Activated naive CD4-positive, alpha-beta T cell treated with anti-CD3 and anti-CD28 coated beads for 36 hours (primary cell): ENCODE measurements at regions of chr4 and their contacts with region 1.

Region 1: DNA sequence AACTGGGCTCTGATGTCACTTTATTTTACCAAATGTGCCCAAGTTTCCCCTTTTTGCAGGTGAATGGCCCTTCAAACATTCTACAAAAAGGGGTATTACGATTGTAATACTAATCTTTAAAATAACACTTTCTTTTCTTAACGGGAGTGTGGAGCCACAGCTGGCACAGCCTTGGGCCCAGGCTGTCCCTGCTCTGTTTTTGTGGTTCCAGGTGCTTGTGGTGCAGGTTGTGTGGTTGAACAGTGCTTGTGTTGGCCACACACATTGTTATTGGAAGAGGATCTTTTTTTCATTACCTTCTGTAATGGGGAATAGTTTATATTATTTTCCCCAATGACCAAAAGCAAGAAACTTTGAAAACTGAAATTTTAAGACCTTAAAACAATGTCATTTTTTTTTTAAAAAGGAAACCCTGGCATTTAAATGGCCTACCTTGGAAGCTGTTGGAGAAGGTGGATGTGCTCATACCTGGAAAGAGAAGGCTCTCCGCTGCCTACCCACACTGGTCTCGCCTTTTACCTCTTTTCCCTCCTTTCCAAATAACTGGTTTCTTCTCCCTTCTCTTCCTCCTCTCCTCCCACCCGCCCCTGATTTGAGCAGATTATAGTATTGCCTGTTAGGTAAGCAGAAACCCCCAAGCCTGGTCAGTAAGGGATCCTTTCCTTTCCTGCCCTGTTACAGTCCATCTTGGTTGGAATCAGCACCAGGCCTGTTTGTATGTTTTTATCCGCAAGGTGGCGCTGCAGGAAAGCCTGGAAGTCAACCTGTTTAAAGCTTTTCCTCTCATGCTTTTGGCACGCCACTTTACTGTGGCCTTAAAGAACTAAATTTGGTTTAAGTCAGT is 28.6 kb downstream of the HADH start:
- DNase-seq: peak; percentile 95
- H3K4me3 Mint-ChIP-seq: no peak overlapping the region
- H3K27ac Mint-ChIP-seq: no peak overlapping the region
- H3K4me1 Mint-ChIP-seq: peaks cover 13% of the 10 kb centered on the region
- H3K27me3 Mint-ChIP-seq: no peaks in the 10 kb centered on the region

Region 2: DNA sequence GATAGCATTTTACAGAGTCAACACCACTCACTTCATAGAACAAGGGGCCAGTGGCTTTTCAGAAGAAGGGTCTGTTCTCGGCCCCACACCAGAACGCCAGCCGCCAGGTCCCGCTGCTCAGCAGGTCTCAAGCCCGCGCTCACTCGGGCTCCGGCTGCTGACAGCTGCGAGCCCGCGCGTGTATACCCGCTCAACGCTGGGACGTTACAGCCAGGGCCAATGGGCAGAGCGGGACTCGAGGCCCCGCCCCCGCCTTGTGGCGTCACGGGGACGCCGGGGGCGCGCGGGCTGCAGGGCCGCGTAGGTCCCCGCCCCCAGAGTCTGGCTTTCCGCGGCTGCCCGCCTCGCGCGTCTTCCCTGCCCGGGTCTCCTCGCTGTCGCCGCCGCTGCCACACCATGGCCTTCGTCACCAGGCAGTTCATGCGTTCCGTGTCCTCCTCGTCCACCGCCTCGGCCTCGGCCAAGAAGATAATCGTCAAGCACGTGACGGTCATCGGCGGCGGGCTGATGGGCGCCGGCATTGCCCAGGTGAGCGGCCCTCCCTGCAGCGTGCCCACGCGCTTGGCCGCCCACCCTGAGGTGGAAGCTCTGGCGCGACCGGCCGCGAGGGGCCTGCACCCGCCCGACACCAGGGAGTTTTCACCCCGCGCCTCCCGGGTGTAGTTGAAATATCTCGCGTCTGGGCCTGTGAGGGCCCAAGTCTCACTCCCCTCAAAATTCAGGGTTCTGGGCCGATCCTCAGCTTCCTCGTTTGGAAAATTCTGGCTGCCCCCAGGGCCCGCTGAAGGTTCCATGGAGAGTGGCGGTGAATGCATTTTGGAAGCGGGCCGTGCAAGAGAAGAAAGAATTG is 28.5 kb before region 1 on chr4 and contains the start of gene HADH:
- CTCF ChIA-PET with region 1: interaction called, 17 read pairs
- intact Hi-C with region 1: no loop called
- DNase-seq: peak; percentile 94
- H3K4me3 Mint-ChIP-seq: peak within 1 kb of the TSS; percentile 98
- H3K27ac Mint-ChIP-seq: peak within 1 kb of the TSS; percentile 90
- H3K4me1 Mint-ChIP-seq: peaks cover 57% of the 10 kb centered on the region
- H3K27me3 Mint-ChIP-seq: no peaks in the 10 kb centered on the region
- total RNA-seq, gene HADH: 56.1 to 57.6 TPM

Region 3: DNA sequence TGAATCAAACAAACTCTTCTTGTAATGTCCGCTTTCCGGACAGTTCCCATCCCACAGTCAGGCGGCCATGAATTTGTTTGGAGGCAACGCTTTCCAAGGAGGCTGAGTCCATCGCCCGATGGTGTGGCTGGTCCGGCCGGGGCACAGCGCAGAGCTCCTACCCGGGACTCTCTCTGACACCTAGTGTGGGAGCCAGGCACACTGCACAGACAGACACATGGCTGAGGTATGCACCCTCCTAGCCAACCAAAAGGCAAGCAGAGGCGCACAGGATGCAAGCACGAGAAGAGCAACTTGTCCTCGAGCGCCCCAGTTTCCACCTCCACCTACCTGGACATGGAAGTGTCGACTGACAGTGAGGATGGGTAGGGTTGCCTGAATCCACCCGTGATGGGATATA is 63.0 kb after region 1 on chr4:
- CTCF ChIA-PET with region 1: no interaction called
- intact Hi-C with region 1: no loop called
- DNase-seq: peak; percentile 67
- H3K4me3 Mint-ChIP-seq: peak overlapping the region; percentile 74
- H3K27ac Mint-ChIP-seq: peak overlapping the region; percentile 93
- H3K4me1 Mint-ChIP-seq: peaks cover 81% of the 10 kb centered on the region
- H3K27me3 Mint-ChIP-seq: no peaks in the 10 kb centered on the region

Region 4: DNA sequence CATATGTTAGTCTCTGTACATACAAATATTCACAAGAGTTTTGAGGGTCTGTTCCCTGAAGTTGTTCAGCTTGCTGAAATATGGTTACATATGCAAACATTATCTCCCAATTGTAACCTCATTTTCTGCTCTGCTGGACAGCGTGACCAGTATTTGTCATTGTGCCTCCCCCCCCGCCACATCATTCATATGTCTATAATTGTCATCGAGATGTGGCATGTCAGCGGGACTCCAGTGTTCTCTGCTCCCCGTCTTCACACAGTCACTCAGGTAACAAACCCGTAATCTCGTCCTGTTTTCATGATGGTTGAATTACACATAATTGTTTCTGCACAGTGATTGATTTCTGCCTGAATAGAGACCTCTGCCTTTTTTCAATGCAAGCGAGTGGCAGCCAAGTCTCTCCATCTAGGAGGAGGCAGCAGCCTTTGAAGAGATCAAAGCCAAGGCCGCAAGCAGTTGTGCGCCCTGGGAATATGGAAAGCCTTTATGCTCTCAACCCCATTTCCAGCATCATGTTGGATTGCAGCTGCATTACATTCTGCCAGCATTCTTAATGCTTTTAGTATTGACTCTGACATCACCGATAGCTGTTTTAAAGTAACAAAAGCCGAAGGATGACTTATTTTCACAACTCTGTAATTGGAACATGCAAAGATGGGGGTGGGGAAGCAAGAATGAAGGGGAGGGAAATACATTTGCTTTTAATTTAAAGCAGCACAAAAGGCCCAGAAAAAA is 123.1 kb after region 1 on chr4:
- CTCF ChIA-PET with region 1: interaction called, 10 read pairs
- intact Hi-C with region 1: no loop called
- DNase-seq: peak; percentile 72
- H3K4me3 Mint-ChIP-seq: peak overlapping the region; percentile 77
- H3K27ac Mint-ChIP-seq: peak overlapping the region; percentile 99
- H3K4me1 Mint-ChIP-seq: peaks cover 89% of the 10 kb centered on the region
- H3K27me3 Mint-ChIP-seq: no peaks in the 10 kb centered on the region

Region 5: DNA sequence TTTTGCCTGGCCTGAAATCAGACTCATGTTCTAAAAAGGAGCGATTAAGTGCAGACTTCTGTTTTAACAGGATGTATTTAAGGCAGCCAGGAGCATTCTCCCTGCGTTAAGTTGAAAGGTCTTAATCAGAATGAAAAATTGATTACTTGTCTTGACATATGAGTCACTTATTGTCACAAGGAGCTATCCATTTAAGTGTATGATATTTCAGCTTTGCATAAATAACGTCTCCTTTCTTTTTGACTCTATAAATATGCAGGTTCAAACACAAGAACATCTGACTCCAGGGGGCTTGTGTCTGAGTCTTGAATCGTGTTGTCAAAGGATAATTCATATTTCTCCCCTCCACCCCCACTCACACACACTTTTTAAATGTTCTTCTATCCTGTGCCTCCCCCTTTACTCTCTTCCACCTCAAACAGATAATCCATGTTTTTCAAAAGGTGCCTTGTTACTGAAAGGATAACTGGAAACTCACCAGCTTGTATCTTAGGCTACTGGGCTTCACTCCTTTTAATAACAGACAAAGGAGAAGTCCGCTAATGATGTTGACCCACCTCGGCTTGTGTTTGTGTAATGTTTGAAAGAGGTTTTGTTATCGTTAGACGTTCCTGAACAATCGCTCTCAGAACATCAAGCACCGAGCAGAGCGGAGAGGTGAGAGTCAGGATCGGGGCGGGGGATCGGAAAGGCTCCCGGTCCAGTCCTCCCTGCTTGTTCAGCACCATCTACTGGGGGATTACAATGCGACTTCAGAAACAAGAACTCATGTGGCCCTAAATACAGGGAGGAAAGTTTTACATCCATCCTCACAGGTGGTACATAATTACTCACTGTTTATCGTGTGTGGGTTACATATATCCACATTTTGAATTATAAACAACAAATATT is 494.6 kb after region 1 on chr4:
- CTCF ChIA-PET with region 1: interaction called, 7 read pairs
- intact Hi-C with region 1: loop called (anchors 1 kb)
- DNase-seq: peak; percentile 72
- H3K4me3 Mint-ChIP-seq: peak overlapping the region; percentile 75
- H3K27ac Mint-ChIP-seq: peak overlapping the region; percentile 72
- H3K4me1 Mint-ChIP-seq: peaks cover 17% of the 10 kb centered on the region
- H3K27me3 Mint-ChIP-seq: no peaks in the 10 kb centered on the region

Region 6: DNA sequence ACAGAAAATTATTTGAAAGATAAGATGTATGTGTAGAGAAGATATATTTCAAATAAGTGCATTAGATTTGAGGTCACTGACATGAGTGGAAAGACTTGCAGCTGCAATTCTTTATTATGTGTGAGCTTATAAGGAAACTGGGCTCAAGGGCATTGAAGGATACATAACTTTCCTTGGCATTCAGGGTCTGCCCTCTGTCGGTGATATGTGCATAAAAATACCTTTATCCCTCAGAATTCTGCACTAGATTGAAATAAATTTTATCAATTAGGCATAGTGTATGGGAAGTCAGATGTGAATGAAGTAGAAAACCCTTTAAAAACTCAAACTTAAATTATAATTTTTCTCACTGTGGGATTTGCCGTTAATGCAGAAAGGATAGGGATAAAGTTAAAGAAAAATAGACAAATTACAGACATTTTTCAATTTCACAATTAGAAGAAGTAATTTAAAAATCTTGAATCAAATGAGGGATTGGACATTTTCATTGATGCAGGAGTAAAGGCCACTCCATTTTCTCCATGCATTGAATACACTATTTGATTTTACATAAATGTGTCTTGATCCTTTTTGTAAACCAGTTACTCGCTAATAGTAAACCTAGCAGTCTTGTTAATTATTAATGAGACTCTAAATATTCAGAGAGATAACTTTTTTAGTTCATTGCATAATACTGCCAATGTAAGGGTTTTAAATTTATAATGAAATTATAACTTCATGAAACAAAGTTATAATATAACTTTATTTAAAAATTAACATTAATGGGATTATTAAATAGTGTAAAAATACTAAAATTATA is 765.6 kb after region 1 on chr4:
- CTCF ChIA-PET with region 1: no interaction called
- intact Hi-C with region 1: loop called (anchors 2 kb)
- DNase-seq: no peak
- H3K4me3 Mint-ChIP-seq: no peak overlapping the region
- H3K27ac Mint-ChIP-seq: no peak overlapping the region
- H3K4me1 Mint-ChIP-seq: no peaks in the 10 kb centered on the region
- H3K27me3 Mint-ChIP-seq: peaks cover 6% of the 10 kb centered on the region

Region 7: DNA sequence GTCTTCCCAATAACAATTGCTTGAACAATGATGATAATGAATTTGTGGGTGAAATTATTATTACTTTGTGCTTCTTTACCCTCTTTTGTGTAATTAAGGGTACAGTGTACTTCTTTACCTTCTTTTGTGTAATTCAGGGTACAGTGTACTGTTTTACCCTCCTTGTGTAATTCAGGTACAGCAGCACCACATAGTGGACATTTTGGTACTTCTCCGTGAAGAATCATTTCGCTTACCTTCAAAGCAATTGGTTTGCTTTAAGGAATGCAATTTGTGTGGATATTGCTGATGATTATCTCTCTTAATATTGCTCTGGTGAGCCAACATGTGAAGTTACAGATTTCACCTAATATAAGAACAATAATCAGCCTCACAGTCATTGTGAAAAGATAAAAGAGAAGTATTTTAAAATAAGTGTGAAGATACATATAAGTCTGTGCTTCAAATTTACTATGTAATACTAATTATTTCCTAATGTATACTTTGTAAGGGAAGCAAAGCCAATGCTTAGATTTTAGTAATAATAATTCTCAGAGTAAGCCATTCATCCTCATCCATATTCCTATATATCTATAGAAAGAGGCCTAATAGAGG is 1388.2 kb after region 1 on chr4:
- CTCF ChIA-PET with region 1: interaction called, 4 read pairs
- intact Hi-C with region 1: loop called (anchors 2 kb)
- DNase-seq: peak; percentile 52
- H3K4me3 Mint-ChIP-seq: no peak overlapping the region
- H3K27ac Mint-ChIP-seq: no peak overlapping the region
- H3K4me1 Mint-ChIP-seq: no peaks in the 10 kb centered on the region
- H3K27me3 Mint-ChIP-seq: no peaks in the 10 kb centered on the region